Naive thymus-derived CD4-positive, alpha-beta T cell (primary cell): ENCODE measurements at regions of chr18 and their contacts with region 1.

Region 1: GRCh38 chr18:32552421-32553030 is 81.8 kb upstream of the GAREM1 start:
- DNase-seq: peak; percentile 8 to 67 (median 57)
- ATAC-seq: peak; percentile 77
- H3K4me3 ChIP-seq: no peak overlapping the region
- H3K4me3 Mint-ChIP-seq: no peak overlapping the region
- H3K27ac ChIP-seq: no peak overlapping the region
- H3K27ac Mint-ChIP-seq: no peak overlapping the region
- H3K4me1 ChIP-seq: no peaks in the 10 kb centered on the region
- H3K4me1 Mint-ChIP-seq: peaks cover 0 to 4% (median 0%) of the 10 kb centered on the region in 7 donors
- H3K27me3 ChIP-seq: no peaks in the 10 kb centered on the region
- H3K27me3 Mint-ChIP-seq: peaks cover 3 to 23% (median 6%) of the 10 kb centered on the region in 5 donors

Region 2: DNA sequence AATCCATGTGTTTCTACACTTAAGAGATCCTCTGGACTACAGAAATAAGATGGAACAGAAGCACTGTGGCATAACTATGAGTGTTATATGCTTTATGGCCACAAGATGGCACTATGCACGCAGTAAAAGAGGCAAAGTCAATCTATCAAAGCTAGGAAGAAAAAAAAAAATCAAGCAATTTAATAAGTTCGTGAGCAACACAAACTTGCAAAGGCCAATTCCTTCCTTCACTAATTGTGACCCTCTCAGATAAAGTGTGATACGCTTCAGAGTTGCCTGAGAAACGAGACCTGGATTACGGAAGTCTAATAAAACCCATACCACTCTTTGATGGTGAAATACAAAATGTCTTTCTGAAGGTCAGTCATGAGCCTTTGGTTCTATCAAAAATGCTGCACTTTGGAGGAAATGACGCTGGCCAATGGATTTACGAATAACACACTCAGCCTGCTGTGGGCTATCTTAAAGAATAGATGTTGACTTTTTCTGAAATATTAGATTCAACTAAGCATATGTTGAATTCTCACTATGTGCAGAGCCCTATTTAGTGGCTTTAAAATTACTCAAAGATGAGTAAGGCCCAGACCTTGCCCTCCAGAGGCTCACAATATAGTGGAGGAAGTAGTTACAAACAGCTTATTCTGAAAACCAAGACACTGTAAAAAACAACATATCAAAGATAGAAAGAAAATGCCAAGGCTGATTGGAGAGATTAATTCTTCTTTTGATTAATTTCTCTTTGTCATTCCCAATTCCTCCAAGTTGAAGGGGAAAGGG is 996.4 kb before region 1 on chr18:
- CTCF ChIA-PET with region 1: interaction called, 5 read pairs
- POLR2A ChIA-PET with region 1: no interaction called
- intact Hi-C with region 1: loop called in 1 of 2 experiments (anchors 1 kb)
- DNase-seq: peak in 7 of 9 donors; percentile 19 to 59 (median 41)
- ATAC-seq: peak; percentile 81
- H3K4me3 ChIP-seq: no peak overlapping the region
- H3K4me3 Mint-ChIP-seq: peak overlapping the region in 1 of 10 donors; percentile 67
- H3K27ac ChIP-seq: no peak overlapping the region
- H3K27ac Mint-ChIP-seq: peak overlapping the region in 2 of 9 donors; percentile 9
- H3K4me1 ChIP-seq: no peaks in the 10 kb centered on the region
- H3K4me1 Mint-ChIP-seq: peaks cover 0 to 3% (median 0%) of the 10 kb centered on the region in 7 donors
- H3K27me3 ChIP-seq: no peaks in the 10 kb centered on the region
- H3K27me3 Mint-ChIP-seq: peaks cover 6 to 27% (median 19%) of the 10 kb centered on the region in 5 donors

Region 3: GRCh38 chr18:31741097-31741735 is 811.3 kb before region 1 on chr18:
- CTCF ChIA-PET with region 1: no interaction called
- POLR2A ChIA-PET with region 1: no interaction called
- intact Hi-C with region 1: loop called (anchors 1 kb)
- DNase-seq: peak in 7 of 9 donors; percentile 12 to 56 (median 46)
- ATAC-seq: peak; percentile 82
- H3K4me3 ChIP-seq: no peak overlapping the region
- H3K4me3 Mint-ChIP-seq: no peak overlapping the region
- H3K27ac ChIP-seq: no peak overlapping the region
- H3K27ac Mint-ChIP-seq: peak overlapping the region in 1 of 9 donors; percentile 14
- H3K4me1 ChIP-seq: no peaks in the 10 kb centered on the region
- H3K4me1 Mint-ChIP-seq: no peaks in the 10 kb centered on the region
- H3K27me3 ChIP-seq: no peaks in the 10 kb centered on the region
- H3K27me3 Mint-ChIP-seq: no peaks in the 10 kb centered on the region

Region 4: DNA sequence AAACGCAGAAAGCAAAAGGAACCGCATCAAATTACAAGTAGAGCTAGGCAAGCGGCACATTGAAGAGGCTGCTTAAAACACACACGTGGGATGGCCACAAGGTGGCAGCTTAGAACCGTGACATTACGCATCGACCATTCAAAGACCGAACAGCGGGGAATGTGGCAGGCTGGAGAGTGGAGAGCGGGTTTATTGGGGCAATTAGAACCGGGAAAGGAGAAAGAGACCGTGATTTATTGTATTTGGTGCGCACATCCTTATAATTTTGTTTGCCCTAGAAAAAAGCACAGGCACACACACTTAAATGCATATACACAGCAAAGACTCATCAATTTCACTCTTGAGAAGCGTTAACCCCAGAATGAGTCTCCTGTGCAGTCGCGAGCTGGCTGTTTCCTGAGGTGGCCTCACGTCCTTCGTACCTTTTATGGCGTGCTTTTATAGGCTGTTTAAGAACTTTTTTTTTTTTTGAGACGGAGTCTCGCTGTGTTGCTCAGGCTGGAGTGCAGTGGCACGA is 394.4 kb before region 1 on chr18:
- CTCF ChIA-PET with region 1: interaction called, 87 read pairs
- POLR2A ChIA-PET with region 1: no interaction called
- intact Hi-C with region 1: loop called (anchors 1 kb)
- DNase-seq: peak; percentile 34 to 81 (median 75)
- ATAC-seq: peak; percentile 96
- H3K4me3 ChIP-seq: peak overlapping the region; percentile 36
- H3K4me3 Mint-ChIP-seq: peak overlapping the region; percentile 39 to 89 (median 78)
- H3K27ac ChIP-seq: no peak overlapping the region
- H3K27ac Mint-ChIP-seq: peak overlapping the region in 2 of 9 donors; percentile 1 to 14
- H3K4me1 ChIP-seq: no peaks in the 10 kb centered on the region
- H3K4me1 Mint-ChIP-seq: peaks cover 0 to 9% (median 6%) of the 10 kb centered on the region in 7 donors
- H3K27me3 ChIP-seq: no peaks in the 10 kb centered on the region
- H3K27me3 Mint-ChIP-seq: peaks cover 0 to 15% (median 0%) of the 10 kb centered on the region in 5 donors

Region 5: DNA sequence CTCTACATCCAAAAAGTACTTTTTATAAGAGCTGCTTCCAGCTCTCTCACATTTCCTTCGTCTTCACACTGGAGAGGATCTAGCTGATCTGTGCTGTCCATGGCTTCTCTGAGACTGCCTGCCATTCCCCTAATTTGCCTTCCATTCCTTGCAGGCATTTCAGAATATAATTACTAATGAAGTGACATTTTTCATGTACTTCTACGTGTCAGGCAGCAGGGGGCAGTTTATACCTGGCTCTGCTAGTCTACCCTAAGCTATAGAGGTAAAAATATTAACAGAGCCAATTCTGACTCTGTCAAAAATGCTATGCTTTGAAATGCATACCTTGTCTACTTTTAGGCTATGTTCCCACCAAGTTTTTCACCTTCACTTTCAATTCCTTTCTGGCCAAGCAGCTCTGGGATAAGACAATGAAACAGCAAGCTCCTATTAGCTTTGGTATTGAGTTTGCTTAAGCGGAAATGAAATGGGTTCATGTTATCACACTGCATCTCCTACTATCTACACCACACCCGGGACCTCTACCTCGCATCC is 280.8 kb before region 1 on chr18:
- CTCF ChIA-PET with region 1: interaction called, 5 read pairs
- POLR2A ChIA-PET with region 1: no interaction called
- intact Hi-C with region 1: loop called (anchors 1 kb)
- DNase-seq: peak in 5 of 9 donors; percentile 10 to 25 (median 20)
- ATAC-seq: peak; percentile 34
- H3K4me3 ChIP-seq: no peak overlapping the region
- H3K4me3 Mint-ChIP-seq: no peak overlapping the region
- H3K27ac ChIP-seq: no peak overlapping the region
- H3K27ac Mint-ChIP-seq: no peak overlapping the region
- H3K4me1 ChIP-seq: no peaks in the 10 kb centered on the region
- H3K4me1 Mint-ChIP-seq: no peaks in the 10 kb centered on the region
- H3K27me3 ChIP-seq: no peaks in the 10 kb centered on the region
- H3K27me3 Mint-ChIP-seq: peaks cover 0 to 18% (median 16%) of the 10 kb centered on the region in 5 donors

Region 6: DNA sequence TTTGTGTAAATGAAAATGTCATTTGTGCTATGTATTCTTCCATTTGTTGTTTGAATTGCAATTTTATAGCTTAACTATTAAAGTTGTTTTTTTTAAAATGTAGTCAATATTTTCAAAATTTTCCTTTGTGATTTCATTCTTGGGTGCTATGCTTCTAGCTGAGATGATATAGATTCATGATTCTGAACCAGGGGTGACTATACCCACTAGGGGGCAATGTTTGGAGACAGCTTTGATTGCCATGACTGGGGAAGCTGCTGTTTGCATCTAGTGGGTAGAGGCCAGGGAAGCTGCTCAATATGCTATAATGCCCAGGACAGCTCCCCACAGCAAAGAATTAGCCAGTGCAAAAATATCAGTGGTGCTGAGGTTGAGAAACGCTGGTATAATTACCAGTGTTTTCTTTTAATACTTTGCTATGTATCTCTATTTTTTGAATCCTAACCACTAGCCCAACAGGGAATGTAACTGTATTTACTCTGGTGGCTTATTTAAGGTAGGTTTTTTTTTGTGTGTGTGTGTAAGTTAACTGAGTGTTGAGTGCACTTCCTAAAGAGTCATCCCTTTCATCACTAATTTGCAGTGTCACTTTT is 262.9 kb before region 1 on chr18:
- CTCF ChIA-PET with region 1: interaction called, 3 read pairs
- POLR2A ChIA-PET with region 1: no interaction called
- intact Hi-C with region 1: loop called (anchors 1 kb)
- DNase-seq: peak in 6 of 9 donors; percentile 8 to 34 (median 26)
- ATAC-seq: peak; percentile 67
- H3K4me3 ChIP-seq: no peak overlapping the region
- H3K4me3 Mint-ChIP-seq: no peak overlapping the region
- H3K27ac ChIP-seq: no peak overlapping the region
- H3K27ac Mint-ChIP-seq: no peak overlapping the region
- H3K4me1 ChIP-seq: no peaks in the 10 kb centered on the region
- H3K4me1 Mint-ChIP-seq: no peaks in the 10 kb centered on the region
- H3K27me3 ChIP-seq: no peaks in the 10 kb centered on the region
- H3K27me3 Mint-ChIP-seq: peaks cover 6 to 37% (median 16%) of the 10 kb centered on the region in 5 donors

Region 7: DNA sequence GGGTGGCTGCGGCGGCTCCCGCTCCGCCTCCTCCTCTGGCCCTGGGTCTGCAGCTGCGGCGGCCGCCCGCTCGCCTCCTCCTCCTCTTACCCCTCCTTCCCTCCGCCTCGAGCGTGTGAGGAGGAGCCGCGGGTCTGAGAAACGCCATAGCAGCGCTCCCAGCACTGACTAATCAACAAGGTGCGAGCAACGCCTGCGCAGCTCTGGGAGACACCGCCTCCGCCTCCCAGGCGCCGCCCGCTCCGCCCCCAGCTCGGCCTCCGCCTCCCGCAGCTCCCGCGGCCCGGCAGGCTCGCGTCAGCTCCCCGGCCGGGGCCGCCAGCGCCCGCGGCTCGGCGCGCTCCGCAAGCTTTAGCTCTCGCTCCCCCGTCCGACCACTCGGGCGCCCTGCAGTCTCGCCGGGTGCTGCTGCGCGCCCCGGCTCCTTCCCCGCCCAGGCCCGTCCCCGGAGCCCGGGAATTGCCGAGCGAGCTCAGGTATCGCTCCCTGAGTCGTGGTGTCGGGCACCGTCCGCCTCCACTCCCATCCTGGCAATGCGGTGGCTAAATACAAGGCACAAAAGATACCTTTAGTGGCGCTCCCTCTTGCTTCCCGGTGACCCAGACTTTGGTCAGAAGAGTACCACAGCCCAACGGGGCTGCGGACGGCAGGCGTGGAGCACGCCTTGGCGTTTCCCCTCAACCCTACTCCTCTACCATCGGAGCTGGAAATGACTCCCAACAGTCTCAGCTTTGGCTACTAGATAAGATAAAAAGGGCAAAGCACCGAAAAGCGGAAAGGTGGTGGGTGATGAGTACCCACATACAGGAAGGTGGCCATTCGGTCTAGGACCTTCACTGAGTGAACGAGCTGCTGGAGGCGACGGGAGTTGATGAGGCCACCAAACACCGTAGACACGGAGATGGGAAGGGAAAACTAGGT is 81.6 kb before region 1 on chr18 and contains the start of gene GAREM1:
- CTCF ChIA-PET with region 1: interaction called, 4 read pairs
- POLR2A ChIA-PET with region 1: no interaction called
- intact Hi-C with region 1: loop called (anchors 2 to 5 kb)
- DNase-seq: peak; percentile 67 to 82 (median 77)
- ATAC-seq: peak; percentile 95
- H3K4me3 ChIP-seq: peak within 1 kb of the TSS; percentile 58
- H3K4me3 Mint-ChIP-seq: peak within 1 kb of the TSS; percentile 78 to 91 (median 89)
- H3K27ac ChIP-seq: no peak within 1 kb of the TSS
- H3K27ac Mint-ChIP-seq: peak within 1 kb of the TSS in 7 of 9 donors; percentile 21 to 86 (median 56)
- H3K4me1 ChIP-seq: peaks cover 9 to 14% of the 10 kb centered on the region in 2 donors
- H3K4me1 Mint-ChIP-seq: peaks cover 12 to 33% (median 26%) of the 10 kb centered on the region in 7 donors
- H3K27me3 ChIP-seq: peaks cover 4 to 5% of the 10 kb centered on the region in 2 donors
- H3K27me3 Mint-ChIP-seq: peaks cover 28 to 79% (median 33%) of the 10 kb centered on the region in 5 donors
- total RNA-seq, gene GAREM1: 0.13 to 0.51 (median 0.43) TPM in 3 of 5 experiments, not detected in the others